ENCODE measurements at regions of chr17 and their contacts with region 1.

Region 1: DNA sequence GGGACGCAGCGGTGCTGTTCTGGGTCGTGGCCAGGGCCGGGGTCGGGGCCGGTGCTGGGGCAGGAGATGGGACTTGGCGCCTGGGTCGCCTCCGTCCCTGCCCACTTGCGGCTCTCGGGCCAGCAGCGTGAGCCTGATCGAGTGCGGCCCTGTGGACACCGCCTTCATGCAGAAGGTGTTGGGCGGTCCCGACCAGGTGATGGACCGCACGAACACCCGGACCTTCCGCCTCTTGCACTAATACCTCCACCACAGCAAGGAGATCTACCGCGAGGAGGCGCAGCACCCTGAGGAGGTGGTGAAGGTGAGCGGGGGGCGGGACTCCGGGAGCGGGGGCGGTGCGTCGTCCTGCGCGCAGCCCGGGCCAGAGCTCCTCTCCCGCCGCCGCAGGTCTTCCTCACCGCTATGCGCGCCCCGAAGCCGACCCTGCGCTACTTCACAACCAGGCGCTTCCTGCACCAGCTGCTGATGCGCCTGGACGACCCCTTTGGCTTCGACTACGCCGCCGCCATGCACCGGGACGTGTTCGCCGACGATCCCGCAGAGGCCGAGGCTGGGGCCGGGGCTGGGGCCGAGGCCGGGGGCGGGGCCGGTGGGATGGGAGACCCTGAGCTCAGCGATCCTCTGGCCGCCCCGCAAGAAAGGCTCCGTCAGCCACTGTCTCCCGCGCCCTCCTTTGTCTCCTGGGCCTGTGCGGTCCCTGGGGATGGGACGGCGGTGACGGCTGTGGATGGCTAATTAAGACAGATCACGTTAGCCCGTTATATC is 4.5 kb upstream of the HSD17B1 start:
- DNase-seq: no peak
- H3K4me3 ChIP-seq: peak overlapping the region; percentile 43
- CTCF ChIP-seq: peak; percentile 52

Region 2: GRCh38 chr17:42525221-42525620 is 23.0 kb before region 1 on chr17:
- CTCF ChIA-PET with region 1: no interaction called
- POLR2A ChIA-PET with region 1: no interaction called
- DNase-seq: peak; percentile 72
- H3K4me3 ChIP-seq: no peak overlapping the region
- CTCF ChIP-seq: no peak

Region 3: GRCh38 chr17:42536048-42536371 is 12.2 kb before region 1 on chr17 and contains the start of gene NAGLU:
- CTCF ChIA-PET with region 1: interaction called, 9 read pairs
- POLR2A ChIA-PET with region 1: interaction called, 10 read pairs
- DNase-seq: no peak
- H3K4me3 ChIP-seq: peak within 1 kb of the TSS; percentile 61
- CTCF ChIP-seq: no peak